Posterior cingulate gyrus (tissue), 11 donors: ENCODE measurements at regions of chr9 and their contacts with region 1.

Region 1: GRCh38 chr9:132235946-132236661 is 74.2 kb downstream of the NTNG2 start:
- DNase-seq: peak; percentile 65 to 97 (median 87)

Region 2: GRCh38 chr9:131762356-131762932 is 473.7 kb before region 1 on chr9:
- intact Hi-C with region 1: loop called (anchors 1 kb)
- DNase-seq: peak; percentile 56 to 97 (median 74)

Region 3: GRCh38 chr9:132079391-132080091 is 156.6 kb before region 1 on chr9 and contains the start of gene MED27:
- intact Hi-C with region 1: loop called (anchors 10 kb)
- DNase-seq: peak; percentile 90 to 99 (median 95)

Region 4: GRCh38 chr9:132169672-132170392 is 66.3 kb before region 1 on chr9:
- intact Hi-C with region 1: loop called (anchors 1 kb)
- DNase-seq: peak in 6 of 10 donors; percentile 61 to 94 (median 76)